Activated CD4-positive, alpha-beta memory T cell treated with anti-CD3 and anti-CD28 coated beads, Interleukin-2, amount 10 ng/mL, durations not matched to agents 7 days and 5 days (primary cell): ENCODE measurements at regions of chr12 and their contacts with region 1.

Region 1: DNA sequence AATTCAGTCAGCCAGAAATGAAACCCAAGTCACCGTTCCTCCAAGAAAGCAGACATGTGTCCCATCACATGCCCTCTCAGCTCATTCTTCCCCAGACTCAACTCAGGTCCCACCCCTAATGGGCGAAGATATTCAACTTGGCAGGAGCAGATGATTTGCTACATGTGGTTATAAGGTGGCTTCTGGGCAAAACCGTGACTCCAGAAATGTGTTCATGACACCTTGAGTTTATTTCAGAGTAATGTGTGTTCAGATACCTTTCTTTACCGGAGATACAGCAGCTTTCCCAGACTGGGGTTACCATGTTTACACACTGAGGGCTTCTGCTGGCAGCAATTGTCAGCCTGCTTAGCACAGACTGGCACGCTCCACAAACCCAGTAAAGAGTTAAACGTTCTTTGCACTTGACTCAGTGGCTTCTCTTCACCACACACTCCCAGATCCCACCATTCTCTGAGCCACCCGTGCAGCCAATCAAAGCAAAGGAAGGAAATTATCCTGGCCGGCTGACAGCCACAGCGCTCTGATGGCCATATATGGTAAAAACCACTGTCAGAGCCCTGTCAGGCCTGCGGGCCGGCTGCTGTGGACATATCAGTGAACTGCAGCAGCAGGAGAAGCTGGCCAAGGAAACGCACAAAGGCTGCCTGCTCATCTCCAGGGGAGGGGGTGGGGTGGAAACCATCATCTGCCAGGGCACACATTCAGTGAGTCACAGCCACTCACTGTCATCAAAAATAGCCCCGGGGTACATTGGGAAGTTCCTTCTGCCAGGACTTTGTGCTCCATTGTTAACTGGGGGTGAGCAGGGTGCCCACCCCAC is 39.9 kb downstream of the CORO1C start:
- DNase-seq: peak; percentile 83
- H3K4me3 Mint-ChIP-seq: peak overlapping the region; percentile 66
- H3K27ac Mint-ChIP-seq: peak overlapping the region; percentile 89
- H3K4me1 Mint-ChIP-seq: peaks cover 66% of the 10 kb centered on the region
- H3K27me3 Mint-ChIP-seq: no peaks in the 10 kb centered on the region

Region 2: GRCh38 chr12:108712925-108713203 is 21.5 kb after region 1 on chr12:
- CTCF ChIA-PET with region 1: no interaction called
- POLR2A ChIA-PET with region 1: no interaction called
- DNase-seq: no peak
- H3K4me3 Mint-ChIP-seq: no peak overlapping the region
- H3K27ac Mint-ChIP-seq: no peak overlapping the region
- H3K4me1 Mint-ChIP-seq: no peaks in the 10 kb centered on the region
- H3K27me3 Mint-ChIP-seq: peaks cover 4% of the 10 kb centered on the region

Region 3: DNA sequence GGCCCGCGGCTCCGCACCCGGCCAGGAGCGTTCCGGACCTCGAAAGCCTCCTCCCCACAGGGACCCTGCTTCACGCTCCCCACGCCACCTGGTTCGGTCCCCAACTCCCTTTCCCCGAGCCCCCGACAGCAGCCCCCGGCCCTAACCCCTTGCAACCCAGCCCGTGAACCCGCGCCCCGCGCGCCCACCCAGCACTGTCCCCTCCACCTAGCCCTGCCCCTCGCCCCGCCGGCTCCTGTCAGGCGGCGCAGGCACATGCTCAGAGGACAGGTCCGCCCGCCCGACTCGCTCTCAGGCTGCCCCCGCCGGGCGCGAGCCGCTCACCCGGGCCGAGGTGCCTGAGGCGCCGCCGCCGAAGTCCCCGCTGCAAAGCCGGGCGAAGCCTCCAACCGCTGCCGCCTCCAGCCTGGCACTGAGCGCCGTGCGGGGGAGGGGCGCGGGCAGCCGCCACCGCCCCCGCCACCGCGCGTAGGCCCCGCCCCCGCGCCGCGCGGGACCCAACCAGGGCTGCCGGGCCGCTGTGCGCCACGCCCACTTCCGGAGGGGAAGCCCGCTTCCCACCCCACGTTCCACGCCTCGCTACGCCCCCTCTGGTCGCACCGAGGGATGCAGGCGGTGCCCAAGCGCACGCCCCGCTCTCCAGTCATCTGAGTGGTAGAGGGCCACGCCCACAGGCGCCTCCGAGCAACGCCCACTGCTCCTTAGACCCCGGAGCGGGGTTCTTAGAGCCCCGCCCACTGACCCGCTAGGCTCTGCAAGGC is 39.9 kb after region 1 on chr12 and contains the start of gene CORO1C:
- CTCF ChIA-PET with region 1: interaction called, 3 read pairs
- POLR2A ChIA-PET with region 1: interaction called, 13 read pairs
- DNase-seq: peak; percentile 98
- H3K4me3 Mint-ChIP-seq: peak within 1 kb of the TSS; percentile 93
- H3K27ac Mint-ChIP-seq: peak within 1 kb of the TSS; percentile 89
- H3K4me1 Mint-ChIP-seq: peaks cover 35% of the 10 kb centered on the region
- H3K27me3 Mint-ChIP-seq: peaks cover 16% of the 10 kb centered on the region
- total RNA-seq, gene CORO1C: 30.9 to 35.7 TPM

Region 4: DNA sequence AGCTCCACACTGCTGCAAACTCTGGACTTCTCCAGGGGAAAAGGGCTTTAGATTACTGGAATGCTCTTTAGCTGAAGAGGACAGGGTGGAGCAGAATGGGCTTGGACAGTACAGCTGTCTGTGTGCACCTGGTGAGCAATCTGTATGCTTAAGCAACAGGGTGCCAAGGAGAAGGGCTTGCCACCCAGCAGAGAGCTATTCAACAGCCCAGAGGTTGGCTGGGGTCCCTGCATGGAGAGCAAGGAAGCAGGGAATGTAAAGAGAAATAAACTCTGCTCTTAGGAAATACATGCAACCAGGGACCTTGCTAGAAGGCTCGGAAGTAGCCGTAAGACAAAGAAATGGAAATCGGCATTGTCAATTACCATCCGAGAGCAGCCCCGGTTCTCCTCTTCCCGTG is 92.9 kb after region 1 on chr12:
- CTCF ChIA-PET with region 1: no interaction called
- POLR2A ChIA-PET with region 1: no interaction called
- DNase-seq: no peak
- H3K4me3 Mint-ChIP-seq: no peak overlapping the region
- H3K27ac Mint-ChIP-seq: no peak overlapping the region
- H3K4me1 Mint-ChIP-seq: no peaks in the 10 kb centered on the region
- H3K27me3 Mint-ChIP-seq: no peaks in the 10 kb centered on the region

Region 5: GRCh38 chr12:108803428-108804105 is 112.2 kb after region 1 on chr12:
- CTCF ChIA-PET with region 1: interaction called, 10 read pairs
- POLR2A ChIA-PET with region 1: no interaction called
- DNase-seq: peak; percentile 70
- H3K4me3 Mint-ChIP-seq: no peak overlapping the region
- H3K27ac Mint-ChIP-seq: peak overlapping the region; percentile 41
- H3K4me1 Mint-ChIP-seq: peaks cover 10% of the 10 kb centered on the region
- H3K27me3 Mint-ChIP-seq: no peaks in the 10 kb centered on the region

Region 6: GRCh38 chr12:109052414-109053323 is 361.3 kb after region 1 on chr12 and contains the start of gene USP30:
- CTCF ChIA-PET with region 1: no interaction called
- POLR2A ChIA-PET with region 1: no interaction called
- DNase-seq: peak; percentile 85
- H3K4me3 Mint-ChIP-seq: peak within 1 kb of the TSS; percentile 85
- H3K27ac Mint-ChIP-seq: peak within 1 kb of the TSS; percentile 91
- H3K4me1 Mint-ChIP-seq: peaks cover 16% of the 10 kb centered on the region
- H3K27me3 Mint-ChIP-seq: no peaks in the 10 kb centered on the region
- total RNA-seq, gene USP30: 6.9 to 13.7 TPM